ENCODE measurements at regions of chr18 and their contacts with region 1.

Region 1: GRCh38 chr18:9070212-9070611 is 32.3 kb upstream of the NDUFV2 start:
- DNase-seq: no peak
- H3K4me3 ChIP-seq: no peak overlapping the region
- H3K27ac ChIP-seq: no peak overlapping the region
- H3K4me1 ChIP-seq: peaks cover 0 to 4% of the 10 kb centered on the region in 2 donors
- H3K27me3 ChIP-seq: no peaks in the 10 kb centered on the region
- CTCF ChIP-seq: no peak
- POLR2A ChIP-seq: no peak

Region 2: GRCh38 chr18:9147440-9148202 is 77.4 kb after region 1 on chr18:
- intact Hi-C with region 1: loop called (anchors 5 kb)
- DNase-seq: peak; percentile 30 to 33
- H3K4me3 ChIP-seq: no peak overlapping the region
- H3K27ac ChIP-seq: peak overlapping the region in 1 of 3 donors; percentile 36
- H3K4me1 ChIP-seq: peaks cover 47 to 73% of the 10 kb centered on the region in 2 donors
- H3K27me3 ChIP-seq: no peaks in the 10 kb centered on the region
- CTCF ChIP-seq: peak; percentile 9 to 83 (median 77)
- POLR2A ChIP-seq: no peak